ENCODE measurements at regions of chr22 and their contacts with region 1.

Region 1: GRCh38 chr22:46149512-46150033 is 753 bp upstream of the PPARA start:
- DNase-seq: no peak
- H3K4me3 ChIP-seq: peak overlapping the region; percentile 59
- H3K27ac ChIP-seq: no peak overlapping the region
- H3K27me3 ChIP-seq: peaks cover 15% of the 10 kb centered on the region
- CTCF ChIP-seq: no peak

Region 2: DNA sequence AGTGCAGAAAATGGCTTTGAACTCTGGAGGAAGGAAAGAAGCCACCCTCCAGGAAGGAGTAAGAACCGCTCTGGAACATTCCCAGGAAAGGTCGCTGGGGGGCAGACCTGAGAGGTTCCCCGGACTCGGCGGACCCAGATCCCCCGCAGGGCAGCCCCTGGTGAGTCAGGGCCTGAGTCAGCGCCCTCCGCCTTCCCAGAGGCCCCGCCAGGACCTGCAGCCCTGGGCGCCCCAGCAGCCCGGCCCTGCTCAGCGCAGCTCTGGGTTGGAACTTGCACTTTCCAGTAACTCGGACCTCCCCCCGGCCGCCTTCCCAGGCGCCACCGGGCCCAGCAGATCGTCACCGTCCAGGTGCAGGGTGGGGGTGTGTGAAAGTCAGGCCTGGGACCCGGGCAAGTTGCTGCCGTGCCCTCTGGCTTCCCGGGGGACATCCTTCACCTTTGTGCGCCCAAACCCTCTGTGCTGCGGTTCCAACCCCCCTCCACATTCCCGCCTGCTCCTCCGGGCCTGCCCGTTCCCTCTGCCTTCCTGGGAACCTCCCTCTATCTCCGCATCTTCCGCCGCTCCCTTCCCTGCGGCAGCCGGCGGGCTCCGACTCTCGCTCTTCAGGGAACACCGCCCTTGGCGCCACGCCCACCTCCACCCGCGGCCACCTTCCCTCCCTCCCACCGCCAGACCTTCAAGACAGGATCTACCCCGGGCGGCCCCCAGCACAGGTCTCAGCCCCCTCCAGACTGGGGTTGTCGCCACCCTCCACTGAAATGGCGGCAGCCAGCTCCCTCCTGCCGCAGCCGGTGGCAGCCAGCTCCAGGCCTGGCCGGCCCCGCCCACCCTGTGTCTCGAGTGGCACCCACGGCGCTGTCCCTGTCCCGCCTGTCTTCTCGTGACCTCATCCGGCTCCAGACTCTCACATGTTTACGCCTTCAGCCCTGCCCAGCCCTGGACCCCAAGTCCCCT is 135.8 kb before region 1 on chr22:
- in situ Hi-C with region 1: no loop called
- DNase-seq: peak; percentile 93
- H3K4me3 ChIP-seq: peak overlapping the region; percentile 64
- H3K27ac ChIP-seq: peak overlapping the region; percentile 85
- H3K27me3 ChIP-seq: no peaks in the 10 kb centered on the region
- CTCF ChIP-seq: peak; percentile 82

Region 3: DNA sequence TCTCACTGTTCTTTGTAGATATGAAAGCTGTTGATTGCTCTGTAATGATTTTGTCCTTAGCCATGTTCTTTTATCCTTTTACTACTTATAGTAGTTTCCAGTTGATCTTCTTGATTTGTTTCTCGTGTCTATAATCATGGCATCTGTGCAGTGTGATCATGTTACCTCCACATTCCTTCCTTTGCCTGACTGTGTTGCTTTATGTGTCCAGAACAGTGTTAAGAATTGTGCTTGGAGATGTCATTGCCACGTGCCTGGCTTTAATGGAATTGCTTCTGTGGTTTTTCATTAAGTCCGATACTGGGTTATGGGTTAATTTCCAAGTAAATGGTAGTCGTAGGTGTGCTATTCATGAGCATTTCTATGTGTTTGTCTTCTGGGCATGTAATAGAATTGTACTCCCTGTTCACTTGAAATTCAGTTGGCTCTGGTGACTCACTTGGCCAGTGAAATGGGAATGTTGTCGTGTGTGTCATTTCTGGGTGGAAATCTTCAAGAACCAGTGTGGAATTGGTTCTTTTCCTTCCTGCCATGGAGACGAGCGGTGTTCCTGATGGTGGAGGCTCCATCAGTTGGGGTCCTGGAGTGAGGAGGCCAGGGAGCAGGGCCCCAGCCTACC is 153.9 kb after region 1 on chr22:
- in situ Hi-C with region 1: loop called (anchors 25 kb)
- DNase-seq: no peak
- H3K4me3 ChIP-seq: no peak overlapping the region
- H3K27ac ChIP-seq: no peak overlapping the region
- H3K27me3 ChIP-seq: no peaks in the 10 kb centered on the region
- CTCF ChIP-seq: no peak